GM12878 (cell line): ENCODE measurements at regions of chr9 and their contacts with region 1.

Region 1: GRCh38 chr9:87569518-87569917 is 71.9 kb downstream of the DAPK1 start:
- DNase-seq: no peak
- ATAC-seq: peak; percentile 63
- H3K4me3 ChIP-seq: no peak overlapping the region
- H3K27ac ChIP-seq: peak overlapping the region; percentile 28; the same call in 1 of the 2 replicates
- H3K4me1 ChIP-seq: peaks cover 27% of the 10 kb centered on the region
- H3K27me3 ChIP-seq: no peaks in the 10 kb centered on the region
- CTCF ChIP-seq: no peak
- EP300 ChIP-seq: no peak
- POLR2A ChIP-seq: no peak
- RAD21 ChIP-seq: no peak

Region 2: DNA sequence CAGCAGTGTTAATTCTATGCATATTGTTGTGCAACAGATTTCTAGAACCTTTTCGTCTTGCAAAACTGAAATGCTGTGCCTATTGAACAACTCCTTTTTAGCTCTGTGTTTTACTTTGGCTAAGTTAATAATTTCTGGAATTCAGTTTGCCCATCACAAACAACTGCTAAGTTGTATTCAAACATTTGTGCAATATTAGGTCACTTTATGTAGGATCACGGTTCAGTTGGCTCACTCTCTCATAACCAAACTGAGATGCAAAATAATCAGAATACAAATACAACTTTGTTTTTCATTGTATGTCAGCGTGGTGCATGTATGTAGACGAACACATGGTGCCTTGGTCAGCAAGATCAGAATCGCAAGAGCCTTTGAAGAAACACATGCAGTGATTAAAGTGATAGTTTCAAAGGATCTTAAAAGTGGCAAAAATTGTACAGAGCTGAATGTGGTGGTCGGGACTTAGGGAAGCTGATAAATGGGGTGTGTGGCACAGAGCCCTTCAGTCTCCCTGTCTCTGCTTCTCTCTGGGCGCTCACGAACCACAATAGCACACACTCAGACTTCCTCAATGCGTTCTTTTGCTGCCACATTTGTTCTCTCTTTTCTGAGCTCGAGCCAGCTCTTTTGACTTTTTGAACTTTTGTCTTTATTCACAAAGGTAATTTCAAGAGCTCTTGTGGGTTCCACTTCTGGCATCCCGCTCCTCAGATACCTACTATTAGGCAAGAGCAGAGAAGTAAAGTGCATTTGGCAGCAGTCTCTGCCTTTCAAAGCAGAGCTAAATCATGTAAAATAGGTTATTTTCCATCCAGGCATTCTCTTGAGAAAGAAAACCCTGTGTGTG is 44.0 kb after region 1 on chr9:
- CTCF ChIA-PET with region 1: interaction called, 3 read pairs
- POLR2A ChIA-PET with region 1: no interaction called
- RAD21 ChIA-PET with region 1: interaction called, 10 read pairs
- SMC1A ChIA-PET with region 1: interaction called, 14 read pairs
- in situ Hi-C with region 1: no loop called
- intact Hi-C with region 1: no loop called
- DNase-seq: peak; percentile 21
- ATAC-seq: peak; percentile 71
- H3K4me3 ChIP-seq: peak overlapping the region; percentile 11; the same call in 1 of the 2 replicates
- H3K27ac ChIP-seq: peak overlapping the region; percentile 59
- H3K4me1 ChIP-seq: peaks cover 27% of the 10 kb centered on the region
- H3K27me3 ChIP-seq: no peaks in the 10 kb centered on the region
- CTCF ChIP-seq: no peak
- EP300 ChIP-seq: no peak
- POLR2A ChIP-seq: no peak
- RAD21 ChIP-seq: no peak